ENCODE measurements at regions of chr5 and their contacts with region 1.

Region 1: DNA sequence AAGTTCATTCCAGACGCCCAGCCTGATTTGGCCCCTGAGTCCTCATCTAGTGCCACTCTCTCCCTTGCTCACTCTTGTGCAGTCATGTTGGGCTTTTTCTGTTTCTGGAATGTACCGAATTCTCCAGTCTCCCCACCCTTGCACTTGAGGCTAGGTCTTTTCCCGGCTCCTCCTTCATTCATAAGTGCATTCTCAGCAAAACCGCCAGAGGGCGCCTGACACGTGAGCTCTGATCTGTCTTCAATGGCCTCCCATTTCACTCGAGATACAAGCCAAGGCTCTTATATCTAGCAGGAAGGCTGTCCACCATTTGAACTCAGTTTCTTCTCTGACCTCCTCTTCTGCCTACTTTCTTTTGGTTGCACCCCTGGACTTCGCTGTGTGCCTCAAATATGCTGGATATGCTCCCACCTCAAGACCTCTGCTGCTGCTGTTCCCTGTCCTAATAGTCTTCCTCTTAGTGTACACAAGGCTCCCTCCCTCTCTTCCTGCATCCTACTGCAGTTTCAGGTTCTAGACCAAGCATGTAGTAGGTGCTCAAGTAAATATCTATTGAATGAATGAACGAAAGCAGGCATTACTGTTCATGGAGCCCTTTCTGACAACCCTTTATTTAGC is 568.1 kb upstream of the WWC1 start:
- DNase-seq: peak; percentile 70
- ATAC-seq: peak; percentile 74
- H3K4me3 ChIP-seq: no peak overlapping the region
- H3K27ac ChIP-seq: no peak overlapping the region
- H3K4me1 ChIP-seq: peaks cover 6% of the 10 kb centered on the region; the same call in 1 of the 2 replicates
- H3K27me3 ChIP-seq: no peaks in the 10 kb centered on the region
- CTCF ChIP-seq: peak; percentile 76
- POLR2A ChIP-seq: no peak
- RAD21 ChIP-seq: peak; percentile 71

Region 2: DNA sequence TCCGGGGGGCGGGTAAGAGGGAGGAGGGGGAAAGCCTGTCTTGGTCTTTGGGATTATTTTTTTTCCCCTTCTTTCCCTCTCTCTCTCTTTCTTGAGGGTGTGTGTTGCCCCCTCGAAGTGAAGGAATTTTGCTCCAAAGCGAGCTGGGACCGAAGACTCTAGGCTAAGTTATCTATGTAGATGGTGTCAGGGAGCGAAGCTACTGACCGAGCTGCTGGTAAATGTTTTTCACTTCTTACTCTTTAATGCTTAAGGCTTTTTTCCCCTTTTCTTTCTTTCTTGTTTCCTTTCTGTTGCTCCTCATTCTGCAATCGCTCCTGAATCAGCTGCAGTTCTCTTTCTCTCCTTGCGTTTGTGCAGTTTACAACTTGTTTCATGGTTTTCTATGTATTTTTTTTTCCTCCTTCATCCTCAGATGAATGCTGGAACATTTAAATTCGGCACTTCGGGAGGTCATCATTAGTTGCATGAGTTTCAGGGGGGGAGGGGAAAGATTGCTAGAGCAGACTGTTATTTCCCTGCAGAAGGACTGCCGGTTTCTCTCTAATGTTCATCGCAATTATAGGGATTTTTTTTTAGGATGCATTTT is 744.0 kb before region 1 on chr5:
- CTCF ChIA-PET with region 1: no interaction called
- POLR2A ChIA-PET with region 1: no interaction called
- dilution Hi-C with region 1: no loop called
- in situ Hi-C with region 1: no loop called
- intact Hi-C with region 1: no loop called
- DNase-seq: no peak
- ATAC-seq: no peak
- H3K4me3 ChIP-seq: peak overlapping the region; percentile 3; the same call in 1 of the 2 replicates
- H3K27ac ChIP-seq: no peak overlapping the region
- H3K4me1 ChIP-seq: no peaks in the 10 kb centered on the region
- H3K27me3 ChIP-seq: no peaks in the 10 kb centered on the region
- CTCF ChIP-seq: no peak
- POLR2A ChIP-seq: no peak
- RAD21 ChIP-seq: no peak

Region 3: GRCh38 chr5:167539747-167540146 is 183.6 kb before region 1 on chr5:
- CTCF ChIA-PET with region 1: no interaction called
- POLR2A ChIA-PET with region 1: no interaction called
- dilution Hi-C with region 1: no loop called
- in situ Hi-C with region 1: no loop called
- intact Hi-C with region 1: no loop called
- DNase-seq: no peak
- ATAC-seq: no peak
- H3K4me3 ChIP-seq: no peak overlapping the region
- H3K27ac ChIP-seq: no peak overlapping the region
- H3K4me1 ChIP-seq: no peaks in the 10 kb centered on the region
- H3K27me3 ChIP-seq: no peaks in the 10 kb centered on the region
- CTCF ChIP-seq: no peak
- POLR2A ChIP-seq: no peak
- RAD21 ChIP-seq: no peak

Region 4: DNA sequence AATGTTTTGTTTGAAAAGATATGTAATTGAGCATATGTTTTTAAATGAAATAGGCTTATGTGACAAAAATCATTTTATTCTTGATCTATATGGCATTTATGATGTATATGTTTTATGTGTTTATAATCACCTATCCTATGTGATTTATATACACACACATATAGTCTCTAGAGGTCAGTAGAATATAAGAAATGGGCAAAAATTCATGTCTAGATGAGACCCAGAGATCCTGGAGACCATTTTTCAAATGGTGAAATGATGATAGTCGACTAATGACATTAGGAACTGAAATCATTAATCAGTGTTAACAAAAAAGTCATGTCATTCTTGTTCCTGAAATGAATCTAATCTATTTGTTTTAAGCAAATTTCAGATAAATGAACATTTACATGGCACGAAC is 141.1 kb before region 1 on chr5:
- CTCF ChIA-PET with region 1: no interaction called
- POLR2A ChIA-PET with region 1: no interaction called
- dilution Hi-C with region 1: no loop called
- in situ Hi-C with region 1: no loop called
- intact Hi-C with region 1: loop called (anchors 2 kb)
- DNase-seq: peak; percentile 8
- ATAC-seq: 0 out of 2 replicates have a peak, but pooled peaks have one; percentile 37
- H3K4me3 ChIP-seq: no peak overlapping the region
- H3K27ac ChIP-seq: no peak overlapping the region
- H3K4me1 ChIP-seq: no peaks in the 10 kb centered on the region
- H3K27me3 ChIP-seq: no peaks in the 10 kb centered on the region; the same call in 1 of the 2 replicates
- CTCF ChIP-seq: peak; percentile 57
- POLR2A ChIP-seq: no peak
- RAD21 ChIP-seq: peak; percentile 67

Region 5: GRCh38 chr5:167644619-167645018 is 78.7 kb before region 1 on chr5:
- CTCF ChIA-PET with region 1: no interaction called
- POLR2A ChIA-PET with region 1: no interaction called
- dilution Hi-C with region 1: no loop called
- in situ Hi-C with region 1: no loop called
- intact Hi-C with region 1: no loop called
- DNase-seq: no peak
- ATAC-seq: no peak
- H3K4me3 ChIP-seq: no peak overlapping the region
- H3K27ac ChIP-seq: no peak overlapping the region
- H3K4me1 ChIP-seq: 0 out of 2 replicates have a peak, but pooled peaks cover 1% of the 10 kb centered on the region
- H3K27me3 ChIP-seq: no peaks in the 10 kb centered on the region
- CTCF ChIP-seq: no peak
- POLR2A ChIP-seq: no peak
- RAD21 ChIP-seq: no peak

Region 6: DNA sequence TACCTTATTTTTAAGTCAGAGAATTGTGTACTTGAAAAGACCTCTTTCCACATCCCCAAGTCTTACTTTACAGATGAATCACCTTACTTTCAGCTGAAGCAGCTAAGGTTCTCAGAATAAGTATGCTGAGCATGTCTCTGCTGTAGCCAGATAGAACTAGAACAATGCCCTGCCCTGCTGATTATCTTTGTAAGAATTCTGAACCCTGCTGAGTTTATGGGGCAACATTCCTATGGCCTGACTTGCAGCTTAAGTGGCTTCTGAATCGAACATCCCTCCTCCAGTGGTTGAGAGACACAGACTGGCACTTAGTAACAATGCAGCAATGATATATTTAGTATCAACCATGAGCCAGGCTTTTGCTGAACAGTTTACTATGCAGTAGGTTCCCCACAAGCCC is 23.9 kb before region 1 on chr5:
- CTCF ChIA-PET with region 1: no interaction called
- POLR2A ChIA-PET with region 1: no interaction called
- dilution Hi-C with region 1: no loop called
- in situ Hi-C with region 1: no loop called
- intact Hi-C with region 1: loop called (anchors 1 kb)
- DNase-seq: peak; percentile 99
- ATAC-seq: peak; percentile 96
- H3K4me3 ChIP-seq: no peak overlapping the region
- H3K27ac ChIP-seq: no peak overlapping the region
- H3K4me1 ChIP-seq: peaks cover 9% of the 10 kb centered on the region
- H3K27me3 ChIP-seq: no peaks in the 10 kb centered on the region
- CTCF ChIP-seq: no peak; the same call in 1 of the 2 replicates
- POLR2A ChIP-seq: no peak
- RAD21 ChIP-seq: no peak

Region 7: DNA sequence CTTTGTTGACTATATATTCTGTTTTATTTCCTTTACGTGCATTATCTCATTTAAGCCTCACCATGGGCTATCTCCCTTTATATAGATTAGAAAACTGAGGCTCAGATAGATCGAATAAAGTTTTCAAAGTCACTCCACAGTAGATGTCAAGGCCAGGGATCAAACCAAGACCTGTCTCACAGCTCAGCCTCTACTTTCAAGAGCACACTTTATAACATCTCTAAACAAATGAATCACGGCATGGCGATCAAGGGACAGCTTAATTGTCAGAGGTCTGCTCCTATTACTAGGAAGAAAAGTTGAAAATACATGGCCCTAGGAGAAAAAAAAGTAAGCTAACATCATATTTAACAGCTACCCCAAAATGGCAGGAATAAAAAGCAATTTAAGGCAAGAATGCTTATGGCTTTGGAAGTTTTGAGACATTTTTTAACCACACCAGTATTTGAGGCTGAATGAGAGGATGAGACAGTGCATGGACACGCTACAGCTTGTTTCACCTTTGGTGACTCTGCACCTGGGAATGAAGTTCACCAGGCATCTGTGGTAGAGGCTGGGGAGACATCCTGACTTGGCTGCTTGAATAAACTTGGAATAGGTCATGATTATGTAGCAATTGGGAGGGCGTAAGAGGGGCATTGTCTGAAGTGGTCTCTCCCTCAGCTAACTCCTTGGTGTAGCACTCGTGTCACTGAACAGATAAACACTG is 81.3 kb after region 1 on chr5:
- CTCF ChIA-PET with region 1: no interaction called
- POLR2A ChIA-PET with region 1: no interaction called
- dilution Hi-C with region 1: no loop called
- in situ Hi-C with region 1: no loop called
- intact Hi-C with region 1: loop called (anchors 5 kb)
- DNase-seq: no peak
- ATAC-seq: no peak
- H3K4me3 ChIP-seq: no peak overlapping the region
- H3K27ac ChIP-seq: no peak overlapping the region
- H3K4me1 ChIP-seq: no peaks in the 10 kb centered on the region
- H3K27me3 ChIP-seq: 0 out of 2 replicates have a peak, but pooled peaks cover 2% of the 10 kb centered on the region
- CTCF ChIP-seq: no peak
- POLR2A ChIP-seq: no peak
- RAD21 ChIP-seq: no peak

Region 8: GRCh38 chr5:167945542-167946384 is 222.4 kb after region 1 on chr5:
- CTCF ChIA-PET with region 1: no interaction called
- POLR2A ChIA-PET with region 1: no interaction called
- dilution Hi-C with region 1: no loop called
- in situ Hi-C with region 1: loop called (anchors 10 kb)
- intact Hi-C with region 1: loop called (anchors 5 kb)
- DNase-seq: peak; percentile 98
- ATAC-seq: peak; percentile 92
- H3K4me3 ChIP-seq: no peak overlapping the region
- H3K27ac ChIP-seq: peak overlapping the region; percentile 91
- H3K4me1 ChIP-seq: peaks cover 15% of the 10 kb centered on the region
- H3K27me3 ChIP-seq: no peaks in the 10 kb centered on the region
- CTCF ChIP-seq: no peak
- POLR2A ChIP-seq: peak; percentile 47; the same call in 1 of the 2 replicates
- RAD21 ChIP-seq: no peak

Region 9: DNA sequence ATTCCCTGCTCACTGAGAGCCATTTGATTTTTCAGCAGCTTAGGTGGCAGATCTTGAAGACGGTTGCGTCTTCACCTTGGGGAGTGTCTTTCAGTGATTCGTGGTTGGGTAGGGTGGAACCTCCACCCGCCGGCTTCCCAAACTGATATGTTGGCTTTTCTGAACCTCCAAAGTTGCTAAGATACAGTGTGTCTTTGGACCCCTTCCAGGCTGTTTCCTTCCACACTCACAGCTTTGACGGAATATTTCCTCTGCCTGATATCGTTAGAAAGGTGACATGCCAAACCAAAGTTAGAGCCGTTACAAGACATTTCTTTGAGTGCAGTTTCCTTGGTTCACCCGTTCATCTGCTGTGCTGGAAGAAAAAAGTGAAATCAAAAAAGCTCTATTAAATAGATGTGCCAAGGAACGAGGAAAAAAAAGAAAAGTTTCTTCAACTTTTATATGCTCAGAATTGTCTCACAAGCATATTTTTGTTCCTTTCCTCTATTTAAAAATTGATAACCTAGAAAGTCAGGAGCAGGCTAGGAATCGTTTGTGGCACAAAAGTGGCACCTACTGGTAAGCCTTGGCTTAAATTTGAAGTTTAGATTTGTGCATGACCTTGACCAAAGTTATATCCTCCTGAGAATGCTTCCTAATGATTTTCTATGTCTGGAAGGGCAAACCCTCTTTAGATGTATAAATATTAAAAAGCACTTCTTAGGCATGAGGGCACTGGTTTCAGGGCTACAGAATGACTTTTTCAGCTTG is 297.4 kb after region 1 on chr5:
- CTCF ChIA-PET with region 1: interaction called, 4 read pairs
- POLR2A ChIA-PET with region 1: no interaction called
- dilution Hi-C with region 1: no loop called
- in situ Hi-C with region 1: no loop called
- intact Hi-C with region 1: loop called (anchors 1 kb)
- DNase-seq: peak; percentile 8
- ATAC-seq: peak; percentile 37; the same call in 1 of the 2 replicates
- H3K4me3 ChIP-seq: no peak overlapping the region
- H3K27ac ChIP-seq: no peak overlapping the region
- H3K4me1 ChIP-seq: no peaks in the 10 kb centered on the region
- H3K27me3 ChIP-seq: peaks cover 20% of the 10 kb centered on the region
- CTCF ChIP-seq: peak; percentile 41
- POLR2A ChIP-seq: no peak
- RAD21 ChIP-seq: peak; percentile 60

Region 10: DNA sequence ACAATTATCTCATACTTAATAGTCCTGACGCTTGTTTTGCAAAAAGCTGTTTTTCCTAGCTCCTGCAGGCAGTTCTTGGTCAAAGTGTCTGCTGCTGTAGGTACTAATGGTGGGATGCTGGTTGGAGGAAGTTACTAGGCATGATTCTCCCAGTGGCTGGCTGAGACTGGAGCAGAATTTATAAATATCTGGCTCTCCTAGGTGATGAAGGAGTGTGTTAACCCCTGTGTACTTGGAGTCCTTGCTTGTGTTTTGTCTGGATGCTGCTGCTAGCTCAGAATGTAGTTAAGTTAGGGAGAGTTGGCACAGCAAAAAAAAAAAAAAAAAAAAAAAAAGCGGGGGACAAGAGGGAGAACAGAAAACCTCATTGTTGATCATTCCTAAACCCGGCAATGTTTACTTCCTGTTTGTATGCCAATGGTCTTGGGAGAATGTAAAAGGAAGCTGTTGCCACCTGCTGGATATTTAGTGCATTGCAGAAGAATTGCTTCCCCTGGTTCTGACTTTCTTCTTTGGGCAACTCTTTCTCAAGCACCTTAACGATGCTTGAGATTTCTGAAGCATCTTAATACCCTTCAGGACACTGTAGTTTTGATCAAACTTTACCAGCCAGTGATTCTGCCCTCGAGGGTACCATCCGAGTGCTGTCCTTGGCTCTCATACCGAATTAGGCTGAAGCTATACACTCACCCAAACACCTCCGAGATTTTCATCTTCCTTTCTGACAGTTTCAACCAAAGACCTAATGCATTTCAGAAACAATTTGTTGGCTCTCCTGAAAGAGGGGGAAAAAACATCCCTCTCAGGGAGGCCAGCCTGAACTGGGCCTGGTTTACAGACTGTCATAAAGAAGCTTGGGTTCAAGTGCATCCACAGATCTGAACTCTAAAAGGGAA is 496.4 kb after region 1 on chr5:
- CTCF ChIA-PET with region 1: no interaction called
- POLR2A ChIA-PET with region 1: no interaction called
- dilution Hi-C with region 1: no loop called
- in situ Hi-C with region 1: no loop called
- intact Hi-C with region 1: loop called (anchors 2 kb)
- DNase-seq: peak; percentile 63
- ATAC-seq: peak; percentile 92
- H3K4me3 ChIP-seq: no peak overlapping the region
- H3K27ac ChIP-seq: no peak overlapping the region
- H3K4me1 ChIP-seq: no peaks in the 10 kb centered on the region
- H3K27me3 ChIP-seq: peaks cover 3% of the 10 kb centered on the region; the same call in 1 of the 2 replicates
- CTCF ChIP-seq: peak; percentile 89
- POLR2A ChIP-seq: no peak
- RAD21 ChIP-seq: peak; percentile 87

Measured in IMR-90 (cell line).